Ovary (tissue), 10 donors: ENCODE measurements at regions of chr18 and their contacts with region 1.

Region 1: GRCh38 chr18:38557006-38557405 is 991.4 kb upstream of the CELF4 start:
- DNase-seq: no peak
- H3K4me3 ChIP-seq: no peak overlapping the region
- H3K27ac ChIP-seq: no peak overlapping the region
- H3K4me1 ChIP-seq: no peaks in the 10 kb centered on the region
- H3K27me3 ChIP-seq: no peaks in the 10 kb centered on the region
- CTCF ChIP-seq: no peak
- EP300 ChIP-seq: no peak
- POLR2A ChIP-seq: no peak

Region 2: GRCh38 chr18:37270038-37270665 is 1286.9 kb before region 1 on chr18:
- intact Hi-C with region 1: no loop called
- DNase-seq: peak; percentile 25 to 68 (median 58)
- H3K4me3 ChIP-seq: no peak overlapping the region
- H3K27ac ChIP-seq: no peak overlapping the region
- H3K4me1 ChIP-seq: no peaks in the 10 kb centered on the region
- H3K27me3 ChIP-seq: no peaks in the 10 kb centered on the region
- CTCF ChIP-seq: no peak
- EP300 ChIP-seq: no peak
- POLR2A ChIP-seq: no peak

Region 3: GRCh38 chr18:38545071-38545470 is 11.9 kb before region 1 on chr18:
- intact Hi-C with region 1: loop called in 1 of 4 experiments (anchors 2 kb)
- DNase-seq: no peak
- H3K4me3 ChIP-seq: no peak overlapping the region
- H3K27ac ChIP-seq: no peak overlapping the region
- H3K4me1 ChIP-seq: no peaks in the 10 kb centered on the region
- H3K27me3 ChIP-seq: no peaks in the 10 kb centered on the region
- CTCF ChIP-seq: no peak
- EP300 ChIP-seq: no peak
- POLR2A ChIP-seq: no peak